SK-N-SH (cell line): ENCODE measurements at regions of chr16 and their contacts with region 1.

Region 1: DNA sequence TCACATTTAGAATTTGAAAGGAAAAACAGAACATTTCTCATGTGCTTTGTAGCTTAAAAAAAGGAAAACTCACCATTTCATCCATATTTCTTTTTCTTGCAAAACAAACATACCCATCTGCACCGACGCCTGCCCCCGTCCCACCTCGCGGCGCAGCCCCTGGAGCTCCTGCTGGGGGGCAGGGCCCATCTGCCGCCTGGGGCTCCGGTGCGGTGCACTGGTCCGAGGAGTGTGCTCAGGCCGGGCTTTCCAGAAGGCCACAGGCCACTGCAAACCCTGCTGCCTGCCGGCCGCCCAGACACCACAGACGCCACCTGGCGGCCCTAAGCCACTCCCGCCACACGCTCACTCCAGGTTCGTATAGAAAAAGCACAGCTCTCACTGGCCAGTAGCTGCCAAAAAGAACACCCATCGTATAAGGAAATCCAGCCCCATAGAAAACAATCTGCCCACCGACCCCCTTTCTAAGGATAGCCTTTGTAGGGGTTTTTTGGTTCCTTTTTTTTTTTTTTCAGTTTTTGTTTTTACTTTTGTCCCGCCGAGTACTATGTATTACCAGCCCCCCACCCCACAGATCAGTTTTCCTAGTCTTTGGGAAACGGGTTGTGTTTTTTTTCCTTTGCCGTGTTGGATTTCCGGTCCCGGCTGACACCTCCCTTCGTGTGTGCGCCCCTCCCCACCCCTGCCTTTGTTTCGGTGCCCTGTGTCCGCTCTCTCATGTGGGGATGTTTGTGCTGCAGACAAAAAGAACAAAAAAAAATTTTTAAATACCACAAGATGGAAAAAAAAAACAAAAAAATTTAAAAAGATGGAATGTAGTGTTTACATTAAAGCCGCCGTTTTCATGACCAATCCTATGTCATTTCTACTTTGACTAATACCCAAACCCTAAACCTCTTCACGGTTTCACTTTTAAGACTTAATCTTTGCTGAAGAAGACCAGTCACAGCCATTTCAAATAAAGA is 68.8 kb downstream of the AMFR start:
- DNase-seq: peak; percentile 93
- H3K4me3 ChIP-seq: peak overlapping the region in 1 of 2 experiments; percentile 35; a peak in 1 of 4 replicates
- H3K27ac ChIP-seq: peak overlapping the region; percentile 24 to 25; a peak in 2 of 4 replicates
- H3K4me1 ChIP-seq: peaks cover 0 to 8% of the 10 kb centered on the region in 2 experiments; a peak in 2 of 4 replicates
- H3K27me3 ChIP-seq: no peaks in the 10 kb centered on the region
- CTCF ChIP-seq: peak; percentile 78
- EP300 ChIP-seq: no peak
- RAD21 ChIP-seq: peak; percentile 73

Region 2: GRCh38 chr16:55898592-55898991 is 458.0 kb before region 1 on chr16:
- CTCF ChIA-PET with region 1: no interaction called
- POLR2A ChIA-PET with region 1: no interaction called
- DNase-seq: no peak
- H3K4me3 ChIP-seq: no peak overlapping the region
- H3K27ac ChIP-seq: no peak overlapping the region
- H3K4me1 ChIP-seq: no peaks in the 10 kb centered on the region
- H3K27me3 ChIP-seq: no peaks in the 10 kb centered on the region
- CTCF ChIP-seq: no peak
- EP300 ChIP-seq: no peak
- RAD21 ChIP-seq: no peak

Region 3: DNA sequence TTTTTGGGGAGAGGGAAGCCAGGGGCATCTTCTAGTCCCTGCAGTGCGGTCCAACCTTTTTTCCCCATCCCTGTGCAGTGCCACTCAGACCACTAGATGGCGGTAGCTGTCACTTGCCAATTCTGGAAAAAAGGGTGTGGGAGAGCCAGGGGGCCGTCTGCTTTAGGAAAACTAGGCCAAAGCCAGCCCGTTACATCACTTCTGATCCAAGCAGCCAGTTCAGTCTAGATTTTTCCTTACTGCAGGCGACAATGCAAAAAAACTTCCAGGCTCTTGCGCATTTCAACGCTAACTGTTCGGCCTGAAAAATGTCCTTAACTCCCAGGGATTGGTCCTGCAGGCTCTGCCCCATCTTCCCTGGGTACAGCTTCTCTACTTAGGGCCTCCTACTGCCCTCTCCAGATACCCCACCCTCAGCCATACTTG is 412.2 kb before region 1 on chr16:
- CTCF ChIA-PET with region 1: interaction called, 50 read pairs
- POLR2A ChIA-PET with region 1: no interaction called
- DNase-seq: peak; percentile 68
- H3K4me3 ChIP-seq: peak overlapping the region in 1 of 2 experiments; percentile 42; a peak in 1 of 4 replicates
- H3K27ac ChIP-seq: no peak overlapping the region
- H3K4me1 ChIP-seq: no peaks in the 10 kb centered on the region; a peak in 1 of 4 replicates
- H3K27me3 ChIP-seq: no peaks in the 10 kb centered on the region
- CTCF ChIP-seq: peak; percentile 93
- EP300 ChIP-seq: no peak
- RAD21 ChIP-seq: peak; percentile 88

Region 4: DNA sequence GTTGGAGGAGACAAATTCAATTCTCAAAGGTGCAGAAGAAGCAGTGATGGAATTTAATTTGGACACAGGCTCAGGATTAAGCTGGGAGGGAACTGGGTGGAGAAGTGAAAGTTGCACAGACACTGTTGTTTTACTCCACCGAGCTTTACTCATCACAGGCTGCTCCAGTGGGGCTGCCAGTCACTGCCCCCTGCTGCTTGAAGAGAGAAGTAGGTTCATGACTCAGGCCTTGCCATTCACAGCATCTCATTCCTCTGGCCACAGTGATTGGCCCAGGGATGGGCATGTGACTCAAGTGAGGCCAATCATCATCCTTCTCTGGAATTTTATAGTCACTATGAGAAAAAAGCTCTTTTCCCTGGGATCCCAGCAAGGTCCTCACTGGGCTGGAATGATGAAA is 153.5 kb before region 1 on chr16:
- CTCF ChIA-PET with region 1: interaction called, 10 read pairs
- POLR2A ChIA-PET with region 1: no interaction called
- DNase-seq: peak; percentile 44
- H3K4me3 ChIP-seq: no peak overlapping the region
- H3K27ac ChIP-seq: no peak overlapping the region
- H3K4me1 ChIP-seq: peaks cover 0 to 3% of the 10 kb centered on the region in 2 experiments; a peak in 1 of 4 replicates
- H3K27me3 ChIP-seq: no peaks in the 10 kb centered on the region
- CTCF ChIP-seq: peak; percentile 37
- EP300 ChIP-seq: no peak
- RAD21 ChIP-seq: peak; percentile 50

Region 5: DNA sequence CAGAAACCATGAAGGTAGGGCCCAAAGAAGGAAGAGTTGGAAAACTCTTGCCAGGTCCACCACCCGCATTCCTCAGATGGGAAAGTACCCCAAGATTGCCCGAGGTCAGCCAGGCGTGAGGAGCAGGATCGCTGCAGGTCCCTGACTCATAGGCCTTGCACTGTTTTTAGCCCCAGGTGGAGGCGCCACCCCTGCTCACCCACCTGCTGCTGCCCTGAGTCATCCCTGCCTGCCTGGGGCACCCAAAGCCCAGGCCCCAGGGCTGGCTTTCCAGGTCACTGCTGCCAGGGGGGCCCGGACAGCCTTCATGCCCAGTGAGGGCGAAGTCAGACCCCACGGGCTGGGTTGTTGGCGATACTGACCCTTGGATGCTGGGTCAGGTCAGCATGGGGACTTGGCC is 32.2 kb before region 1 on chr16:
- CTCF ChIA-PET with region 1: interaction called, 42 read pairs
- POLR2A ChIA-PET with region 1: no interaction called
- DNase-seq: no peak
- H3K4me3 ChIP-seq: no peak overlapping the region
- H3K27ac ChIP-seq: no peak overlapping the region
- H3K4me1 ChIP-seq: peaks cover 0 to 3% of the 10 kb centered on the region in 2 experiments; a peak in 1 of 4 replicates
- H3K27me3 ChIP-seq: no peaks in the 10 kb centered on the region; the same call in 1 of the 2 replicates
- CTCF ChIP-seq: no peak
- EP300 ChIP-seq: no peak
- RAD21 ChIP-seq: no peak

Region 6: GRCh38 chr16:56332464-56333079 is 24.0 kb before region 1 on chr16:
- CTCF ChIA-PET with region 1: interaction called, 42 read pairs
- POLR2A ChIA-PET with region 1: no interaction called
- DNase-seq: peak; percentile 57
- H3K4me3 ChIP-seq: no peak overlapping the region
- H3K27ac ChIP-seq: no peak overlapping the region
- H3K4me1 ChIP-seq: no peaks in the 10 kb centered on the region; a peak in 1 of 4 replicates
- H3K27me3 ChIP-seq: no peaks in the 10 kb centered on the region
- CTCF ChIP-seq: peak; percentile 46
- EP300 ChIP-seq: no peak
- RAD21 ChIP-seq: peak; percentile 51

Region 7: DNA sequence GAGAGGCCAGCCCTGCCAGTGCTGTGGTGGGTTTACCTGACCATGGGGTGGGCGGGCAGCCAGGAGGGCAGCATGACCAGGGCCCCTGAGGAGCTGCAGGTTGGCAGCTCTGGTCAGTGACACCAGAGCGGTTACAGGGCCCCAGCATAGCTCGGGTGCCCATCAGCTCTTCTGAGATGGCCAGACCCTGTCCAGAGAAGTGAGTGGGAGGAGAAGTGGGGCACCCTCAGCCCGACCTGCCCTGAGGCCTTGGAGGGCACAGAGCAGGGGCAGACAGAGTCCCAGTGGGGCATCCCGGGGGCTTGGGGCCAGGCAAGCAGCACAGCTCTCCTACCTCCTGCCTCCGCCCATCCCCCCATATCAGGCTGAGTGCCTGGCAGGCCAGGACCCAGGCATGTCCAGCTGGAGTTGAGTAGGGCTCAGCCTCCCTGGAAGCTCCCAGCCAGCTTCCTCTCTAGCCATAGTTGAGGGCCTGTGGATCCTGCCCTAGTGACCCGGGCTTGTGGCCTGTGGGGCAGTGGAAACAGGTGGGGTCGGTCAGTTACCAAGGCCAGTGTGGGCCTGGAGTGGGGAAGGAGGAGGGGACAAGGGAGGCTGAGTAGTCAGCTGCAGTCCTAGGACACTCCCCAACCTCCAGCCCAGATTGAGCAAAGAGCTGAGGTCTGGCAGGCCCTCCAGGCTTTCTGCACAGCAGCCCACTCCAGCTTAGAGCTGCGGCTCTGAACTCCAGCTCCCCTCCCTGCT is 14.7 kb before region 1 on chr16:
- CTCF ChIA-PET with region 1: interaction called, 18 read pairs
- POLR2A ChIA-PET with region 1: no interaction called
- DNase-seq: no peak
- H3K4me3 ChIP-seq: no peak overlapping the region
- H3K27ac ChIP-seq: peak overlapping the region in 1 of 2 experiments; percentile 50; a peak in 1 of 4 replicates
- H3K4me1 ChIP-seq: peaks cover 0 to 13% of the 10 kb centered on the region in 2 experiments; a peak in 1 of 4 replicates
- H3K27me3 ChIP-seq: no peaks in the 10 kb centered on the region
- CTCF ChIP-seq: no peak
- EP300 ChIP-seq: no peak
- RAD21 ChIP-seq: no peak

Region 8: GRCh38 chr16:56370877-56371659 is 14.5 kb after region 1 on chr16:
- CTCF ChIA-PET with region 1: interaction called, 20 read pairs
- POLR2A ChIA-PET with region 1: no interaction called
- DNase-seq: no peak
- H3K4me3 ChIP-seq: no peak overlapping the region
- H3K27ac ChIP-seq: peak overlapping the region in 1 of 2 experiments; percentile 39; a peak in 1 of 4 replicates
- H3K4me1 ChIP-seq: peaks cover 9 to 18% of the 10 kb centered on the region in 2 experiments
- H3K27me3 ChIP-seq: no peaks in the 10 kb centered on the region
- CTCF ChIP-seq: no peak
- EP300 ChIP-seq: no peak
- RAD21 ChIP-seq: no peak

Region 9: DNA sequence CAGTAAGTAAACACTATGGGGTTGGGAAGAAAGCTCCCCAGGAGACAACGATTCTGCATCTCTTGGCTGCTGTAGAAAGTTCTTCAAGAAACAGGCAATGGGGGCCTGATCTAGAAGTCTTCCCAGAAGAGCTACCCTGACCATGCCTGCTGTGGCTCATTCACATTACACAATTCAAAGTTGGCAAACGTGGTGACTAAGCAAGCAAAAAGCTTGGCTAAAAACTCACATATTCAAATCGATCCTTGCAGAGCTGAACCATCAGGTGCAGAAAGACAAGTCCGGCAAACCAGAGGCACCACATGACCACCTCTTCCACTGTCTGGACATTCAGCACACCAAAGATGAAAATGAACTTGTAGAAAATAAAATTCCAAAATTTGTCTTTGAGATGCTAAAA is 52.6 kb after region 1 on chr16:
- CTCF ChIA-PET with region 1: no interaction called
- POLR2A ChIA-PET with region 1: no interaction called
- DNase-seq: no peak
- H3K4me3 ChIP-seq: no peak overlapping the region
- H3K27ac ChIP-seq: no peak overlapping the region
- H3K4me1 ChIP-seq: no peaks in the 10 kb centered on the region
- H3K27me3 ChIP-seq: no peaks in the 10 kb centered on the region
- CTCF ChIP-seq: no peak
- EP300 ChIP-seq: no peak
- RAD21 ChIP-seq: no peak

Region 10: GRCh38 chr16:56477096-56477878 is 120.7 kb after region 1 on chr16:
- CTCF ChIA-PET with region 1: no interaction called
- POLR2A ChIA-PET with region 1: no interaction called
- DNase-seq: no peak
- H3K4me3 ChIP-seq: no peak overlapping the region
- H3K27ac ChIP-seq: peak overlapping the region; percentile 40 to 85; a peak in 3 of 4 replicates
- H3K4me1 ChIP-seq: peaks cover 0 to 17% of the 10 kb centered on the region in 2 experiments; a peak in 1 of 4 replicates
- H3K27me3 ChIP-seq: no peaks in the 10 kb centered on the region
- CTCF ChIP-seq: no peak
- EP300 ChIP-seq: no peak
- RAD21 ChIP-seq: no peak